Aorta (tissue), 5 donors: ENCODE measurements at regions of chr15 and their contacts with region 1.

Region 1: GRCh38 chr15:77024271-77025082 is 29.6 kb downstream of the PSTPIP1 start:
- DNase-seq: peak; percentile 72 to 91
- ATAC-seq: peak; percentile 65
- H3K4me3 ChIP-seq: no peak overlapping the region
- H3K27ac ChIP-seq: no peak overlapping the region
- H3K4me1 ChIP-seq: no peaks in the 10 kb centered on the region
- H3K27me3 ChIP-seq: no peaks in the 10 kb centered on the region

Region 2: GRCh38 chr15:76939715-76940114 is 84.8 kb before region 1 on chr15:
- intact Hi-C with region 1: loop called in 1 of 2 experiments (anchors 5 kb)
- DNase-seq: no peak
- ATAC-seq: no peak
- H3K4me3 ChIP-seq: no peak overlapping the region
- H3K27ac ChIP-seq: no peak overlapping the region
- H3K4me1 ChIP-seq: no peaks in the 10 kb centered on the region
- H3K27me3 ChIP-seq: no peaks in the 10 kb centered on the region

Region 3: DNA sequence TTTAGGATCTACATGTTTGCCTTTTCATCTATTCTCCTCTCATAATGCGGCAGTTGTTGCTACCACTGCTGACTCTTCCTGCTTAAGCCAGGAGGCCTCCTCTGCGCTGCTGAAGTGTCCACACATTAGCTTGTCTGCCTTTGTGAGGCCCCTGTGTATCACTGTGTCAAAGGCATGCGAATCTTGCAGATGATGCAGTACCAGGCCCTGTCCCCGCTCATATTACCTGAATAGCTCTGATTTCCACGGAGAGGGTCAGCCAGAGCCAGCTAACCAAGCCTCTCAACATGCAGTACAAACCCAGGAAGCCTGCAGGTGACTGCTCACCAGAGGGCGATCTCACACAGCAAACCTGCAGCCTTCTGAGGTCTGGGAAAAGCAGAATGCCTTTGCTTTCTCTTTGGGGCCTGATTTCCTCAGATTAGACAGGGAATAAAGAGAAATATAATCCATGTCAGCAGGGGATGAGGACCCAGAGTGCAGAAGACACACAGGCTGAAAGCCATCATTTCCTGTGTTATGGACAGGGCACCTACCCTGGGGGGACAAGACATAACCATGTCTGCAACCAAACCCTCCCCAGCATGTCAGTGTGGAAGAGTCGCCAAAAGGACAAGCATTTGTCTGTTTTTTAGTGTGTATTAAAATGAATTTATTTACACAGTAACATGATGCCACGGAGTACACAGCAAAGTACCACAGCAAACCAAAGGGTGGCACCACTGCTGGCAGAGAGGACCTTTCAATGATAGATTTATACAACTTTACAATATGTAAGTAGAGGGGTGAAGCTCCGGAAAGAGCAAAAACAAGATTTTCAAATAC is 83.3 kb after region 1 on chr15:
- intact Hi-C with region 1: loop called in 1 of 2 experiments (anchors 2 kb)
- DNase-seq: peak in 1 of 2 donors; percentile 61
- ATAC-seq: peak; percentile 70
- H3K4me3 ChIP-seq: no peak overlapping the region
- H3K27ac ChIP-seq: no peak overlapping the region
- H3K4me1 ChIP-seq: no peaks in the 10 kb centered on the region
- H3K27me3 ChIP-seq: no peaks in the 10 kb centered on the region